Endothelial cell of umbilical vein (primary cell): ENCODE measurements at regions of chr4 and their contacts with region 1.

Region 1: DNA sequence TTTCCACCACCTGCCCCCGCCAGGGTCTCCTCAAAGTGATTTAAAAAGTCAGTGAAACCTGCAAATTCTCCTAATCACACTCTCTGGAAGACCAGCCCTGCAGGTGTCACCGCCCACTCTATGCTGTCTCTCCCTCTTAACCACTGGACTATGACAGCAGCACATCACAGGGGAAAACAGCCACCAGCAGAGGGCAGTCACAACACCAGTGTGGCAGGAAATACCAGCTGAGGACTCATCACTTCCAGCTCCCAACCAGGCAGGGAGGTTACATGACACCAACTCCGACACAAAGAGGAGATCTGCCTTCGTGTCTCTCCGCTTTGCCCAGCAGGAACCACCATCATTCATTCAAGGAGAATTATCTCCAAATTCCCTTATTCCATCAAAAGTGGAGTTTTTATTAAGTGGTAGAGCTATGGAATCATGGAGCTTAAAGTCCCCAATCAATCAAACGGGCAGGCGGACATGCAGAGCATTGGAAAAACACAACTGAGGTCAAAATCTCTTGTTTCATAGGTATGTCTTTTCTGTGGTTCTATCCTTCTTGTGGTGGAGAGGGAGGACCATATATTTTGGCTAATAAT is 91.3 kb downstream of the NSUN7 start:
- DNase-seq: peak; percentile 83
- H3K4me3 ChIP-seq: no peak overlapping the region
- H3K27ac ChIP-seq: peak overlapping the region; percentile 50
- H3K4me1 ChIP-seq: peaks cover 4% of the 10 kb centered on the region
- H3K27me3 ChIP-seq: no peaks in the 10 kb centered on the region
- CTCF ChIP-seq: peak; percentile 76 to 95
- POLR2A ChIP-seq: no peak

Region 2: DNA sequence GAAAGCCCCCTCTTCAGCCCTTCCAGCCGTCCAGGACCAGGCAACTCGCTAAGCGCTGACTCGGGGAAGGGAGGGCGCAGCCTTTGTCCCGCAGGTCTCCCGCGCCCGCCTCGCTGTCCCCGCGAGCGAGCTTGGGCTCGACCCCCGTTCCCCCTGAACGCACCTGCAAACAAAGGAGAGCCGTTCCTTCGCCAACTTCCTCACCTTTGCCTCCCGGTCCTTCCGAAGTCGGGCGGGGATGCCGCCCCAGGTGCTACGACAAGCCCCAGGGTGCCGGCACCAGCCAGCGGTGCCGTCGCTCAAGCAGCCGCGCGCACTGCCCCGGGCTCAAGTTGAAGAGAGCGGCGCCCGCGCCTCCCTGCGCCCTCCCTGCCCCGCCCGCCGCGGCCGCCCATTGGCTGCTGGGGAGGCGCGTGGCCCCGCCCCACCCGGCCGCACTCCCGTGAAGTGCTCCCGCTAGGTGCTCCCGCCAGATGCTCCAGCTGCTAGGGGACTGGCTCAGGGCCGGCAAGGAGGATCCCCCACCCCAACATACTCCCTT is 15.8 kb after region 1 on chr4:
- CTCF ChIA-PET with region 1: interaction called, 21 read pairs
- POLR2A ChIA-PET with region 1: no interaction called
- dilution Hi-C with region 1: no loop called
- intact Hi-C with region 1: no loop called
- DNase-seq: peak; percentile 42
- H3K4me3 ChIP-seq: peak overlapping the region in 2 of 3 experiments; percentile 6 to 24
- H3K27ac ChIP-seq: no peak overlapping the region
- H3K4me1 ChIP-seq: no peaks in the 10 kb centered on the region
- H3K27me3 ChIP-seq: no peaks in the 10 kb centered on the region
- CTCF ChIP-seq: no peak
- POLR2A ChIP-seq: no peak